Activated naive CD8-positive, alpha-beta T cell treated with anti-CD3 and anti-CD28 coated beads, Interleukin-2, amount 10 ng/mL, durations not matched to agents 7 days and 5 days (primary cell): ENCODE measurements at regions of chr1 and their contacts with region 1.

Region 1: DNA sequence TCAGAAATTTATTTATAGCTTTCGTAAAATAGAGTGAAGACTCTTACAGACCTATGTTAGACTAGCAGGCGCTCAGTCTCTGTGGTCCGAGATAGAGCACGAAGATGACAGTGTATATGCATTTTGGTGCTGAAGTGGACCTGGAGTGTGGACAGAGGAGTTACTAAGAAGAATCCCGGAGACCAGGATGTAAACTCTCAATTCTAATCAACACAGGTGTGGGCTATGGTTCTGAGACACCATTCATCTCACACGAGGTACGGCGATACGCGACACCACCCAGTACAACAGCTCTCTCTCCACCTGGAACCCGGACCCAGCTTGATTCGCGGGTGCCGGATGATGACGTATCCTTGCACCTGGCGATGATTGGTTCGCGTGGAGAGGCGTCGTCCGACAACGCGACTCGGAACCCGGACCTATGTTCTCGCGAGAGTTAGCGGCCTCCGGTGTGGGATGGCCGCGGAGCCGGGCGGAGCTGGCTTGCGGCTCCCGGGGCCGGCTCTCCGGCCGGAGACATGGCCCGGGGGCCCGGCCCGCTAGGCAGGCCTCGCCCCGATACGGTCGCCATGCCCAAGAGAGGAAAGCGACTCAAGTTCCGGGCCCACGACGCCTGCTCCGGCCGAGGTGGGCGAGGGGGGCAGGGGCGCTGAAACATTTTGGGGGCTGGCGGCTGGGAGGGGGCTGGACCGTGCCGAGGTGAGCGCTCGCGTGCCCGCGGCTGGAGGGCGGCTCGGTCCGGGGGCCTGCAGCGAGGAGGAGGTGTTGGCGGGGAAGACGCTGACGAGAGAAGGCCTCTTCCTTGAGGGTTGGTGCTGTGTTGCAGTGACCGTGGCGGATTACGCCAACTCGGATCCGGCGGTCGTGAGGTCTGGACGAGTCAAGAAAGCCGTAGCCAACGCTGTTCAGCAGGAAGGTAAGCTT is at the start of gene TMEM183A:
- DNase-seq: peak; percentile 91
- ATAC-seq: peak; percentile 92
- H3K4me3 Mint-ChIP-seq: peak within 1 kb of the TSS; percentile 85
- H3K27ac Mint-ChIP-seq: peak within 1 kb of the TSS; percentile 97
- H3K4me1 Mint-ChIP-seq: peaks cover 21% of the 10 kb centered on the region
- H3K27me3 Mint-ChIP-seq: no peaks in the 10 kb centered on the region
- total RNA-seq, gene TMEM183A: 77.1 to 78.4 TPM

Region 2: GRCh38 chr1:202926720-202927491 is 80.3 kb before region 1 on chr1 and contains the start of gene KLHL12:
- POLR2A ChIA-PET with region 1: interaction called, 13 read pairs
- DNase-seq: peak; percentile 95
- ATAC-seq: peak; percentile 94
- H3K4me3 Mint-ChIP-seq: peak within 1 kb of the TSS; percentile 96
- H3K27ac Mint-ChIP-seq: peak within 1 kb of the TSS; percentile 97
- H3K4me1 Mint-ChIP-seq: peaks cover 19% of the 10 kb centered on the region
- H3K27me3 Mint-ChIP-seq: peaks cover 2% of the 10 kb centered on the region
- total RNA-seq, gene KLHL12: 30.1 to 30.5 TPM

Region 3: DNA sequence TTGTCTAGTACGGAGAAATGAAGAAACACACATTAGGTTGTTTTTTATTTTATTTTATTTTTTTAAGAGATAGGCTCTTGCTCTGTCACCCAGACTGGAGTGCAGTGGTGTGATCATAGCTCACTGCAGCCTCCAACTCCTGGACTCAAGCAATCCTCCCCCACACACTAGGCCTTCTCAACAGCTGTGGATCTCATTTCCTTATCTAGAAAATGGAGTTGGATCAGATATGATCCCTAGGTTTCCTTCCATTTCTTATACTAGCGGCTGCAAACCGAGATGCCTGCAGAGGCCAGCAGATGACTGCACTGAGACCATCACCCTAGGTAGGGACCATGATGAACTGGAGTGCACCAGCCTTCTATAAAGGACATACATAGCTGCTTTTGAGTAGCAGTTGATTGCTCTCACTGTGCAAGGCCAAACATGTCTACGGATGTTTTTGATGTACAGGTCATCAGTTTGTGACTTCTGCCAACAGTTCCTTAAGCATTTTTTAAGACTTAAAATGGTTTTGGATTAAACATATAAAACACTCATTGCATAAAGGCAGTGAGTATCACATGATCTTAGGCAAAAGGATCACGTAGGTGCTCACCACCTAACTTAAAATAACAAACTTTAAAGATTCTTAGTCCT is 68.8 kb before region 1 on chr1:
- POLR2A ChIA-PET with region 1: no interaction called
- DNase-seq: no peak
- ATAC-seq: no peak
- H3K4me3 Mint-ChIP-seq: no peak overlapping the region
- H3K27ac Mint-ChIP-seq: no peak overlapping the region
- H3K4me1 Mint-ChIP-seq: no peaks in the 10 kb centered on the region
- H3K27me3 Mint-ChIP-seq: peaks cover 23% of the 10 kb centered on the region

Region 4: GRCh38 chr1:202968840-202969295 is 38.3 kb before region 1 on chr1:
- POLR2A ChIA-PET with region 1: interaction called, 15 read pairs
- DNase-seq: no peak
- ATAC-seq: peak; percentile 46
- H3K4me3 Mint-ChIP-seq: peak overlapping the region; percentile 1
- H3K27ac Mint-ChIP-seq: peak overlapping the region; percentile 0
- H3K4me1 Mint-ChIP-seq: peaks cover 22% of the 10 kb centered on the region
- H3K27me3 Mint-ChIP-seq: peaks cover 12% of the 10 kb centered on the region